ENCODE measurements at regions of chr12 and their contacts with region 1.

Region 1: DNA sequence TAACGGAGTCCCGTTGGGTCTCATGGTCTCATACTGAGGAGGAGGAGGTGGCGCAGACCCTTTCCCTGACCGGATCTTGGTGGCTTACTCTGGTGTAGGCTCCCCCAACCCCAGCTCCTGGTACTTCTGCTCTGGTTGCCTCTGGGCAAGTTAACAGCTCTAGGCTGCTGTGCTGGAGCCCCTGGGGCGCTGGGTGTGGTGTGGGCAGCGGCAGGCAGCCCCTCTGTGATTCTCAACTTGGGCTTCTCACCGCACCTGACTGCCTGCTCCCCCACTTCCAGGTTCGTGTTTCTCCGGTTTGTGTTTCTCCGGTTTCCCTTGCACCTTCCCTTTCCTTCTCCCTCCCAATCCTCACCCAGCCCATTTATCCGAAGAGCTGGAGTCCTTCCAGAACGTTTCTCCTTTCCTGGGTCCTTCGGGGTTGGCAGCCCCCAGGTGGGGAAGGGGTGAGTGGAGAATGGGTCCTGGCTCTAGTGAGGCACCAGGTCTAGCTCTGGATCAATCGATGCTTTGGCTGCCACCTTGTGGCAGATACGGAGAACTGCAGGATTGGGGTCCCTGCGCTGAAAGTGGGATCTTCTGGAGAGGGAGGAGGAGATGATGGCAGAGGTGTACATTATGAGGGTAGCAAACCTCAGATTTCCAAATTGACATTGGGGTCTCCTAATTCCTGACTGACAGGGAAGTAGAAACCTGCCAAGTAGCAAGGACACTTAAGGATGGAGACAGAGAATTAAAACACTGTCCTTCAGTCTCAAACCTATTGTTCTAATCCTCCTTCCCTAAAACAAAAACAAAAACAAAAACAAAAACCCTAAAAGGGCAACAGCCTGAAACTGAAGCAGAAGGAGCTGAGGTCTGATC is 8.3 kb downstream of the CISTR start:
- DNase-seq: peak in 2 of 3 donors; percentile 40 to 72
- ATAC-seq: peak; percentile 48 to 51
- H3K4me3 ChIP-seq: no peak overlapping the region
- H3K27ac ChIP-seq: no peak overlapping the region
- H3K4me1 ChIP-seq: no peaks in the 10 kb centered on the region
- H3K27me3 ChIP-seq: no peaks in the 10 kb centered on the region

Region 2: DNA sequence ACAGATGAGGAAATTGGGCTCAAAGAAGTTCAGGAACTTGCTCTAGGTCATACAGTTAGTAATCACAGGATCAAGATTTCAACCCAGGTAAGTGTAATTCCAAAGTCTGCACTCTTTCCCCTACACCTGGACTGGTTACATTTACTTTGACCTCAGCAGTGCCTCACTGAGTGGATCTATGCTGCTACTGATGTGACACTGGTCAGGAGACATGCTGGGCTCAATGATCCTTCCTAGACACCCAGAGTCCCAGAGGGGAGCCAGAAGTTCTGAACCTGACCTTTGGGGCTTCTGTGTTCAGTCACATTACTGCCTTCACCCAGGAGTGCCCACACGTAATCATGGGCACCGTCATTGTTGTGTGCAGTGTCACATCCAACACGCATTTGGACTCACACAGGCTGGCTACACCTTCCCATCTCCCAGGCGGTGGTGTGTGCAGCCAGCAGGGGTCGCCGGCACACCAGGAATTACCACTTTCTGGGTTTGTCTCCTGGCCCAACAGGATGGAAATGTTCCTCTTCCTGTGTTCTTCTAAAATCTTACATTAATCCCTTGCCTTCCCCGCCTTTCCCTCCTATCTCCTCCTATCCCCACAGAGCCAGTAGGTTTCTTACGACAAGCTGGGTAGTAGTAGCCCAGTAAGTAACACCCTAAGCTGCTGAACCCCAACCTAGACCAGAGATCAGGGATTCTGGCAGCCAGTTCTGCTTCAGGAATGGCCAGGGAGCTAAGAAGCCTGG is 41.8 kb before region 1 on chr12:
- intact Hi-C with region 1: loop called (anchors 2 kb)
- DNase-seq: peak; percentile 82 to 93 (median 92)
- ATAC-seq: peak; percentile 93
- H3K4me3 ChIP-seq: no peak overlapping the region
- H3K27ac ChIP-seq: no peak overlapping the region
- H3K4me1 ChIP-seq: no peaks in the 10 kb centered on the region
- H3K27me3 ChIP-seq: no peaks in the 10 kb centered on the region